ENCODE measurements at regions of chr16 and their contacts with region 1.

Region 1: GRCh38 chr16:84672276-84673202 is 24.2 kb downstream of the KLHL36 start:
- DNase-seq: peak; percentile 68 to 88
- ATAC-seq: peak; percentile 88 to 95
- H3K4me3 ChIP-seq: no peak overlapping the region
- H3K27ac ChIP-seq: no peak overlapping the region
- H3K4me1 ChIP-seq: no peaks in the 10 kb centered on the region
- CTCF ChIP-seq: peak; percentile 89
- EP300 ChIP-seq: no peak
- POLR2A ChIP-seq: no peak
- RAD21 ChIP-seq: peak; percentile 62 to 74

Region 2: DNA sequence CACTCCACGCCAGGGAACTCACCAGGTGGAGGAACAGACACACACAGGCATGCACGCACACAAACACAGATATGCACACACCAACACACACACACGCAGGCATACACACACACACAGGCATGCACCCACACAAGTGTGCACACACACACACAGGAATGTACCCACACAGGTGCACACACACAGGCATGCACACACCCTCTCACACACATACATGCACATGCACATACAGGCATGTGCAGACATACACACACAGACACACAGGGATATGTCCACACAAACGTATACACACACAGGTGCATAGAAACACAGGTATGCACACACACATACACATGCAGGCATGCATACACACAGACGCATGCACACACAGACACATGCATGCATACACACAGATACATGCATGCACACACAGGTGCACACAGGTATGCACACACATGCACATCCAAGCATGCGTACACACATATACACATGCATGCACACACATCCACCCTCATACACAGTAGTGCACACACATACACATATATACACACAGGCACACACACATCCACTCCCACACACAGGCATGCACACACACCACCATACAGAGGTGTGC is 93.9 kb before region 1 on chr16:
- CTCF ChIA-PET with region 1: no interaction called
- POLR2A ChIA-PET with region 1: no interaction called
- DNase-seq: no peak
- ATAC-seq: no peak
- H3K4me3 ChIP-seq: no peak overlapping the region
- H3K27ac ChIP-seq: no peak overlapping the region
- H3K4me1 ChIP-seq: peaks cover 10% of the 10 kb centered on the region
- CTCF ChIP-seq: no peak
- EP300 ChIP-seq: no peak
- POLR2A ChIP-seq: no peak; the same call in 1 of the 2 replicates
- RAD21 ChIP-seq: no peak

Region 3: GRCh38 chr16:84607694-84608093 is 64.8 kb before region 1 on chr16:
- CTCF ChIA-PET with region 1: no interaction called
- POLR2A ChIA-PET with region 1: no interaction called
- DNase-seq: no peak
- ATAC-seq: no peak
- H3K4me3 ChIP-seq: no peak overlapping the region
- H3K27ac ChIP-seq: no peak overlapping the region
- H3K4me1 ChIP-seq: peaks cover 25% of the 10 kb centered on the region
- CTCF ChIP-seq: no peak
- EP300 ChIP-seq: no peak
- POLR2A ChIP-seq: no peak
- RAD21 ChIP-seq: no peak

Region 4: DNA sequence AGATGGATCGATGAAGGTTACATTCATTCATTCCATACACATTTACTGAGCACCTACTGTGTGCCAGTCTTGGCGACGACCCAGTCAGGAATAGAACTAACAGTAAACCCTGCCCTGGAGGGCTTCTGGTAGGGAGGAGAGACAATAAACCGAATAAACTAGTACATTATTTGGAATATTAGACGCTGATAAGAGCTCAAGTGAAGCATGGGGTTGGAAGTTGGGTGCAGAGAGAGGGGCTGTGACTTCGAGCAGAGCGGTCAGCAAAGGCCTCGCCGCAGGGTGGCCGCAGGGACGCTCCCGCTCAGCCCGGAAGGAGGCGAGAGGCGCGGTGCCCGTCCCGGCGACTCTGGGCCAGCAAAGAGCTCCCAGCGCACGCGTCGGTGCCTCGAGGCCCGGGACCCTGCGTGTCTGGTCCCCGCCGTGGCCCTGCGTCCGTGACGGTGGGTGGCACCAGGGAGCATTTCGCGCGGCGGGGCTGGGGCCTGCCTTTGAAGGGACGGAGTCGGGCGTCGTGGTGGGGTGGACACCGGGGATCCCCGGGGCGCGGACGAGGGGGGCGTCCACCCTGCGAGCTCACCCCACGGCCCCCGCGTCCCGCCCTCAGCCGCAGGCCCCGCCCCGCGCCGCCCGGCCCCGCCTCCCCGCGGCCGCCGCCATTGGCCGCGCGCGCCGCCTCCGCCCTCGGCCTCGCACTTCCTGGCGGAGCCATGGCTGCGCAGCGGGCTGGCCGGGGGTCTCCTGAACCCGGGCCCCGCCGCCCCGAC is 24.5 kb before region 1 on chr16 and contains the start of gene KLHL36:
- CTCF ChIA-PET with region 1: interaction called, 26 read pairs
- POLR2A ChIA-PET with region 1: no interaction called
- DNase-seq: peak; percentile 46 to 82
- ATAC-seq: peak; percentile 82 to 91
- H3K4me3 ChIP-seq: peak within 1 kb of the TSS; percentile 92
- H3K27ac ChIP-seq: peak within 1 kb of the TSS; percentile 90 to 99
- H3K4me1 ChIP-seq: peaks cover 23% of the 10 kb centered on the region; the same call in 2 of the 3 replicates
- CTCF ChIP-seq: no peak
- EP300 ChIP-seq: no peak
- POLR2A ChIP-seq: no peak; the same call in 1 of the 2 replicates
- RAD21 ChIP-seq: no peak
- polyA plus RNA-seq, gene KLHL36: 21.0 and 22.3 TPM in 2 replicates

Region 5: DNA sequence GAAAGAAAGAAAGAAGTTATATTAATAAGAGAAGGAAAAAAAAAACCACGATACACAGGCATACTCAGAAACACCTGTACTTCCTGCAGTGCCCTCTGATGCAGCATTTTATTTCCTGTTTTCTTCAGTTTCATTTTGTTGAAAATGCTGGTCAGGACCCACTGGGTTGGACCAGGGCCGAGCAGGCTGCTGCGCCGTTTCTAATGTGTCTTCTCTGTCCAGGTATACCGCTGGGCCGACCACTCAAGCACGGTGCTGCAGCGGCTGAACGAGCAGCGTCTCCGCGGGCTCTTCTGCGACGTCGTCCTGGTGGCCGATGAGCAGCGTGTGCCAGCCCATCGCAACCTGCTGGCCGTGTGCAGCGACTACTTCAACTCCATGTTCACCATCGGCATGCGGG is 15.9 kb before region 1 on chr16:
- CTCF ChIA-PET with region 1: interaction called, 62 read pairs
- POLR2A ChIA-PET with region 1: no interaction called
- DNase-seq: no peak
- ATAC-seq: no peak
- H3K4me3 ChIP-seq: no peak overlapping the region
- H3K27ac ChIP-seq: no peak overlapping the region
- H3K4me1 ChIP-seq: no peaks in the 10 kb centered on the region
- CTCF ChIP-seq: no peak
- EP300 ChIP-seq: no peak
- POLR2A ChIP-seq: no peak
- RAD21 ChIP-seq: no peak

Region 6: GRCh38 chr16:84687715-84688114 is 15.2 kb after region 1 on chr16:
- CTCF ChIA-PET with region 1: interaction called, 68 read pairs
- POLR2A ChIA-PET with region 1: no interaction called
- DNase-seq: no peak
- ATAC-seq: no peak
- H3K4me3 ChIP-seq: no peak overlapping the region
- H3K27ac ChIP-seq: no peak overlapping the region
- H3K4me1 ChIP-seq: no peaks in the 10 kb centered on the region
- CTCF ChIP-seq: no peak
- EP300 ChIP-seq: no peak
- POLR2A ChIP-seq: no peak
- RAD21 ChIP-seq: no peak

Region 7: GRCh38 chr16:84699712-84700445 is 27.3 kb after region 1 on chr16 and contains the start of gene USP10:
- CTCF ChIA-PET with region 1: interaction called, 27 read pairs
- POLR2A ChIA-PET with region 1: interaction called, 3 read pairs
- DNase-seq: peak; percentile 81 to 88
- ATAC-seq: peak; percentile 89 to 95
- H3K4me3 ChIP-seq: peak within 1 kb of the TSS; percentile 100
- H3K27ac ChIP-seq: peak within 1 kb of the TSS; percentile 95 to 99
- H3K4me1 ChIP-seq: peaks cover 30% of the 10 kb centered on the region
- CTCF ChIP-seq: no peak
- EP300 ChIP-seq: no peak
- POLR2A ChIP-seq: peak; percentile 80
- RAD21 ChIP-seq: no peak
- polyA plus RNA-seq, gene USP10: 93.5 and 144 TPM in 2 replicates

Region 8: GRCh38 chr16:84714028-84714427 is 41.5 kb after region 1 on chr16:
- CTCF ChIA-PET with region 1: interaction called, 138 read pairs
- POLR2A ChIA-PET with region 1: no interaction called
- DNase-seq: no peak
- ATAC-seq: no peak
- H3K4me3 ChIP-seq: no peak overlapping the region
- H3K27ac ChIP-seq: no peak overlapping the region
- H3K4me1 ChIP-seq: peaks cover 11% of the 10 kb centered on the region
- CTCF ChIP-seq: no peak
- EP300 ChIP-seq: no peak
- POLR2A ChIP-seq: no peak
- RAD21 ChIP-seq: no peak

Region 9: DNA sequence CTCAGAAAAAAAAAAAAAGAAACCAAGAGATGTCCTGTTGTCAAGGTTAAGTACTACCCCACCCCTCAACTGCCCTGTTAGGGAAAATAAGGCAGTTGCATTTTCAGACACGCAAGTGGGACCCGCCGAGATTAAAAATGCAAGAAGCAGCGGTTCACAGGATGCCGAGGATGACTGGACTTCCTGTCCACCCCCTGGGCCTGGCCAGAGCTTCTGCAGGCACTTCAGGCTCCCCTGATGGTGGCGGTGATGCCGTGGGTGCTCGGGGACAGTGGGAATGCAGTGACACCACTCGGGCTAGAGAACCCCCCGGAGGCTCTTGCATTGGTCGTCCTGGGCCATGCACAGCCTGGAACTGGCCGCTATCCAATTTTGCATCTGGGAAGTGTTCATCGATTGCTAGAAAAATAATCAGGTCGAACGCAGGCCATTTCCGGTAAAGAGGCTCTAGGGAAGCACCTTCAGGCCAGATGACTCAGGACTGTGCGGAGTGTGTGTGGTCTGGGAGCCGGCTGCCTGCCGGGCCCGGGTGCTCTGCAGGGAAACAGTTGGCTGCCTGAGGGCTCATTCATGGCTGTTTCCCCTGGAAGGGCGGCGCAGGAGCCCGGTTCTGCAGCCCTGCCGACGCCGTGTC is 133.8 kb after region 1 on chr16:
- CTCF ChIA-PET with region 1: no interaction called
- POLR2A ChIA-PET with region 1: no interaction called
- DNase-seq: peak; percentile 40 to 52
- ATAC-seq: peak; percentile 80 to 83
- H3K4me3 ChIP-seq: 0 out of 3 replicates have a peak overlapping the region, but pooled peaks have one; percentile 8
- H3K27ac ChIP-seq: peak overlapping the region; percentile 44 to 86
- H3K4me1 ChIP-seq: peaks cover 9% of the 10 kb centered on the region; the same call in 1 of the 3 replicates
- CTCF ChIP-seq: no peak
- EP300 ChIP-seq: no peak
- POLR2A ChIP-seq: no peak
- RAD21 ChIP-seq: no peak

Measured in A549 (cell line).